ENCODE measurements at regions of chr2 and their contacts with region 1.

Region 1: GRCh38 chr2:69012310-69013141 is 453 bp upstream of the ANTXR1 start:
- DNase-seq: peak in 1 of 2 donors; percentile 83
- H3K4me3 ChIP-seq: peak overlapping the region; percentile 77 to 87
- H3K27ac ChIP-seq: peak overlapping the region; percentile 81 to 87
- H3K4me1 ChIP-seq: peaks cover 0 to 8% of the 10 kb centered on the region in 2 donors
- H3K27me3 ChIP-seq: no peaks in the 10 kb centered on the region
- CTCF ChIP-seq: peak; percentile 79 to 89 (median 84)

Region 2: GRCh38 chr2:68943581-68944568 is 68.7 kb before region 1 on chr2:
- intact Hi-C with region 1: loop called (anchors 5 kb)
- DNase-seq: peak in 1 of 2 donors; percentile 80
- H3K4me3 ChIP-seq: no peak overlapping the region
- H3K27ac ChIP-seq: peak overlapping the region in 1 of 2 donors; percentile 13
- H3K4me1 ChIP-seq: peaks cover 0 to 3% of the 10 kb centered on the region in 2 donors
- H3K27me3 ChIP-seq: no peaks in the 10 kb centered on the region
- CTCF ChIP-seq: peak; percentile 72 to 86 (median 83)

Region 3: DNA sequence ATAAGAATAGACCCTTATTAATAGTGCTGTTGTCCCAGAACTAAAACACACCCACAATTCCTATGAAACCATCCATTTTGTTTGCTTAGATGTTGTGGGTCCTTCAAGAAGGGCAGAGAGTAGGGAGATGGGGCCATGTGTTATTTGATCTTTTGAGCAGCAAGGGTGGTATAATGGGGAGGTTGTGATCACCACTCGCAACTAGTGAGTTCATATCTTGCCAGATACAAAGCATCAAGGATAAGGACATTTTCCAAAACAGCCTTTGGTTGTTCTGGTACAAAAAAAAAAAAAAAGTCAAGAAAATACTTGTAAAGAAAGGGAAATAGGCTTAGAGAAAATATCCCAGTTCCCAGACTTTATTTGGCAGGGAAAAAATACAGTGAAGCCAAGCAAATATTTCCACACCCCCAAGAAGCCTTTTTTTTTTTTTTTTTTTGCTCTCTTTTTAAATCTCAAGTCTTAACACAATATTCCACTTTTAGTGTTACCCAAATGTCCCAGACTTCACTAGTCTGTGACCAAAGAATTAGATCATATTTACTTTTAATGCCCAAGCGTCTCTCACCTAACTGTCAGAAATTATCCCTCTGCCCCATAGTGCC is 54.6 kb after region 1 on chr2:
- intact Hi-C with region 1: loop called (anchors 5 kb)
- DNase-seq: no peak
- H3K4me3 ChIP-seq: no peak overlapping the region
- H3K27ac ChIP-seq: peak overlapping the region; percentile 92
- H3K4me1 ChIP-seq: peaks cover 14 to 56% of the 10 kb centered on the region in 2 donors
- H3K27me3 ChIP-seq: no peaks in the 10 kb centered on the region
- CTCF ChIP-seq: no peak

Region 4: GRCh38 chr2:69118609-69119008 is 106.1 kb after region 1 on chr2:
- intact Hi-C with region 1: loop called (anchors 5 kb)
- DNase-seq: peak in 1 of 2 donors; percentile 66
- H3K4me3 ChIP-seq: peak overlapping the region in 1 of 2 donors; percentile 28
- H3K27ac ChIP-seq: peak overlapping the region; percentile 90 to 91
- H3K4me1 ChIP-seq: peaks cover 16 to 68% of the 10 kb centered on the region in 2 donors
- H3K27me3 ChIP-seq: no peaks in the 10 kb centered on the region
- CTCF ChIP-seq: no peak

Region 5: GRCh38 chr2:69177785-69178636 is 165.5 kb after region 1 on chr2:
- intact Hi-C with region 1: loop called (anchors 5 kb)
- DNase-seq: peak; percentile 93 to 97
- H3K4me3 ChIP-seq: peak overlapping the region; percentile 26 to 32
- H3K27ac ChIP-seq: peak overlapping the region; percentile 92 to 96
- H3K4me1 ChIP-seq: peaks cover 13 to 41% of the 10 kb centered on the region in 2 donors
- H3K27me3 ChIP-seq: no peaks in the 10 kb centered on the region
- CTCF ChIP-seq: no peak

Region 6: DNA sequence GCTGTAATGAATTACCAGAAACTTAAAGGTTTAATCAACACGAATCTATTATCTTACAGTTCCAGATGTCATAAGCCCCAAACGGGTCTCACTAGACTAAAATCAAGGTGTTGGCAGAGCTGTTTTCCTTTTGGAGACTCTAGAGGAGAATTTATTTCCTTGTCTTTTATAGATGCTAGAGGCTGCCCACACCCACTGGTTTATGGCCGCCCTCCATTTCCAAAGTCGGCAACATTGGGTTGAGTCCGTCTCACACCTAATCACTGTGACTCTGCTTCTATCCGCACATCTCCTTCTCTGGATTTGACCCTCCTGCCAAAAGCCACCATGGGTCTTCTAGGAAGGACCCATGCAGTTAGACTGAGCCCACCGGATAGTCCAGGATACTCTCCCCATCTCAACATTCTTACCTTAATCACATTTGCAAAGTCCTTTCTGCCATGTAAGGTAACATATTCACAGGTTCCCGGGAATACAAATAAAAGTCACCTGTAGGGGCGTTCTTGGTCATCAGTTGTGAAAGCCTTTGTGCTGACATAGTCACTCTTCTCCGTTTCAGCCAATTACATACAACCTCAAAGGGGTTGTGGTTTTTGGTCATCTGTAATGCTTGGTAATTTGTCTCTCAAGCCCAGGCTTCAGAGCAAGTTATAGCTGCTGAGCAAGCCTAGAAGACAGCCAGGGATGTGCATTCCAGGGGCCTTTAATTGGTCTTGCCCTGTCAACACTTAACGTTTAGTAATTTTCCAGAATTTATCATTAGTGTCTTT is 179.8 kb after region 1 on chr2:
- intact Hi-C with region 1: loop called (anchors 5 kb)
- DNase-seq: no peak
- H3K4me3 ChIP-seq: no peak overlapping the region
- H3K27ac ChIP-seq: no peak overlapping the region
- H3K4me1 ChIP-seq: peaks cover 0 to 29% of the 10 kb centered on the region in 2 donors
- H3K27me3 ChIP-seq: no peaks in the 10 kb centered on the region
- CTCF ChIP-seq: no peak

Region 7: GRCh38 chr2:69306822-69307578 is 294.5 kb after region 1 on chr2:
- intact Hi-C with region 1: loop called (anchors 1 kb)
- DNase-seq: peak; percentile 33 to 92
- H3K4me3 ChIP-seq: peak overlapping the region; percentile 64 to 75
- H3K27ac ChIP-seq: peak overlapping the region; percentile 81 to 82
- H3K4me1 ChIP-seq: peaks cover 4 to 42% of the 10 kb centered on the region in 2 donors
- H3K27me3 ChIP-seq: no peaks in the 10 kb centered on the region
- CTCF ChIP-seq: peak; percentile 78 to 89 (median 86)